A673 (cell line): ENCODE measurements at regions of chr20 and their contacts with region 1.

Region 1: GRCh38 chr20:346640-347316 is at the start of gene NRSN2:
- DNase-seq: peak; percentile 86
- H3K4me3 ChIP-seq: peak within 1 kb of the TSS; percentile 74
- H3K27ac ChIP-seq: peak within 1 kb of the TSS; percentile 88
- H3K4me1 ChIP-seq: peaks cover 17% of the 10 kb centered on the region
- H3K27me3 ChIP-seq: no peaks in the 10 kb centered on the region
- CTCF ChIP-seq: no peak
- total RNA-seq, gene NRSN2: 43.4 and 55.4 TPM in 2 replicates

Region 2: GRCh38 chr20:335686-336439 is 10.9 kb before region 1 on chr20:
- CTCF ChIA-PET with region 1: interaction called, 7 read pairs
- POLR2A ChIA-PET with region 1: interaction called, 13 read pairs
- intact Hi-C with region 1: no loop called
- DNase-seq: no peak
- H3K4me3 ChIP-seq: no peak overlapping the region
- H3K27ac ChIP-seq: no peak overlapping the region
- H3K4me1 ChIP-seq: no peaks in the 10 kb centered on the region
- H3K27me3 ChIP-seq: no peaks in the 10 kb centered on the region
- CTCF ChIP-seq: no peak

Region 3: DNA sequence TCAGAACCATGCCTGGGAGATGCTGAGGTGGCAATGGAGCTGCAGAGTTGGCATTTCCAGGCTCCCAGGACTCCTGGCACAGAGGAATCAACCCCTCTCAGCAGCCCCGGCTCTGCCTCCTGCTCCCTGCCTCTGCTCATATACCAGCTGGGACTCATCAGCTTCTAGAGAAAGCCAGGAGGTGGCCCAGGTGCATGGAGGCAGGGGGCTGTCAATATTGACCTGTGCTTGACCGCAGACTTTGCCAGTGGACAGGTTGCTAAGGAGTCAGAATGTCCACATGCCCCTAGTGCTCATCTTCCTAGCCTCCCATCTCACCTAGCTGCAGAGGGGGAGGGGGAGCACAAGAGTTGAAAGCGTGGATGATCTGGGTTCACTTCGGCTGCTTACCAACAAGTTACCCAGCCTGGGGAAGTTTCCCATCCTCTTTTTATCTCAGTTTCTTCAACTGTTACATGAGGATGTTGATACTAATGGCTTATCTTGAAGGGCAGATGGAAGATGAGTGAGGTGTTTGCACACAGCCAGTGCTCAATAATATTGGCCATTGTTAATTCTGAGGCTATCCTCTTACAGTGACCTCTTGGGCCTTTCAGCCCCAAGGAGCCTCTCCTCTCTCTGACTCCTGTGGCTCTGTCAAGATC is 338.0 kb after region 1 on chr20:
- CTCF ChIA-PET with region 1: no interaction called
- POLR2A ChIA-PET with region 1: no interaction called
- intact Hi-C with region 1: no loop called
- DNase-seq: no peak
- H3K4me3 ChIP-seq: no peak overlapping the region
- H3K27ac ChIP-seq: no peak overlapping the region
- H3K4me1 ChIP-seq: no peaks in the 10 kb centered on the region
- H3K27me3 ChIP-seq: peaks cover 18% of the 10 kb centered on the region
- CTCF ChIP-seq: no peak